MCF 10A (cell line): ENCODE measurements at regions of chr9 and their contacts with region 1.

Region 1: GRCh38 chr9:35923927-35924763 is 14.9 kb downstream of the SPAAR start:
- DNase-seq: peak; percentile 87
- H3K4me3 Mint-ChIP-seq: peak overlapping the region; percentile 49
- H3K27ac Mint-ChIP-seq: peak overlapping the region; percentile 90
- H3K4me1 Mint-ChIP-seq: peaks cover 16% of the 10 kb centered on the region
- H3K27me3 Mint-ChIP-seq: no peaks in the 10 kb centered on the region
- CTCF ChIP-seq: no peak

Region 2: DNA sequence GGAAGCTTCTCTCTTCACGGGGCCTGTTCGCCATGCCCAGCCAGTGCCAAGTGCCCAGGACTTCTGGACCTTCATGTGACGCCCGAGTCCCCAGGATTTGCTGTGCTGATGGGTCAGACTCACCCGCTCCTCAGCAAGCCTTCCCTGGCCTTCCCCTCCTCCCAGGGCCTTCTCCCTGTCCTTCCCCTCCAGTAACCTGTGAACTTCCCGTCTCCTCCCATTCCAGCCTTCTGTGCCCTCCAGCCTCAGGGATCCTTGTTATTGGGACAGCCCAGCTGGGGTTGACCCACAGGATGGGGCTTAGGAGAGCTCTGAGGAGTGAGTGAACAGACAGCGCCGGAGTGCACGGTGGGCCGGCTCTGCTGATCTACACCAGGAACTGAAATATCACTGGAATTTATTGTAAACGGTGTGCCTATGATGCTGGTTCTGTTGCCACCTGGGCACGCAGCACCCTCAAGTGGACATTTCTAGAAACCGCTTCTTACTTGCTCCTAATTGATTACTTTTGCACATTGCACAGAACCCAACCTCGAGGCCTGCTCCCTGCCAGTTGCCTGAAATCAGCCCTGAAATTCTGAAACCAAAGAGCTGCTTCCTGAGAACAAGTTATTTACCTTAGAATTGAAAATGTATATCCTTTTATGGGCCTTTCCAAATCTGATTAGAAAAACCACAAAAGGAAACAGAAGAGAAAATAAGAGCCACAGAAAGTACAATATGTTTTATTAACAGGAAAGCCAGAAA is 13.4 kb before region 1 on chr9:
- CTCF ChIA-PET with region 1: interaction called, 26 read pairs
- POLR2A ChIA-PET with region 1: interaction called, 55 read pairs
- intact Hi-C with region 1: no loop called
- DNase-seq: peak; percentile 86
- H3K4me3 Mint-ChIP-seq: peak overlapping the region; percentile 53
- H3K27ac Mint-ChIP-seq: peak overlapping the region; percentile 88
- H3K4me1 Mint-ChIP-seq: peaks cover 42% of the 10 kb centered on the region
- H3K27me3 Mint-ChIP-seq: no peaks in the 10 kb centered on the region
- CTCF ChIP-seq: peak; percentile 55

Region 3: GRCh38 chr9:35935755-35936509 is 11.8 kb after region 1 on chr9:
- CTCF ChIA-PET with region 1: interaction called, 3 read pairs
- POLR2A ChIA-PET with region 1: interaction called, 26 read pairs
- intact Hi-C with region 1: no loop called
- DNase-seq: peak; percentile 43
- H3K4me3 Mint-ChIP-seq: no peak overlapping the region
- H3K27ac Mint-ChIP-seq: peak overlapping the region; percentile 74
- H3K4me1 Mint-ChIP-seq: peaks cover 19% of the 10 kb centered on the region
- H3K27me3 Mint-ChIP-seq: no peaks in the 10 kb centered on the region
- CTCF ChIP-seq: no peak

Region 4: DNA sequence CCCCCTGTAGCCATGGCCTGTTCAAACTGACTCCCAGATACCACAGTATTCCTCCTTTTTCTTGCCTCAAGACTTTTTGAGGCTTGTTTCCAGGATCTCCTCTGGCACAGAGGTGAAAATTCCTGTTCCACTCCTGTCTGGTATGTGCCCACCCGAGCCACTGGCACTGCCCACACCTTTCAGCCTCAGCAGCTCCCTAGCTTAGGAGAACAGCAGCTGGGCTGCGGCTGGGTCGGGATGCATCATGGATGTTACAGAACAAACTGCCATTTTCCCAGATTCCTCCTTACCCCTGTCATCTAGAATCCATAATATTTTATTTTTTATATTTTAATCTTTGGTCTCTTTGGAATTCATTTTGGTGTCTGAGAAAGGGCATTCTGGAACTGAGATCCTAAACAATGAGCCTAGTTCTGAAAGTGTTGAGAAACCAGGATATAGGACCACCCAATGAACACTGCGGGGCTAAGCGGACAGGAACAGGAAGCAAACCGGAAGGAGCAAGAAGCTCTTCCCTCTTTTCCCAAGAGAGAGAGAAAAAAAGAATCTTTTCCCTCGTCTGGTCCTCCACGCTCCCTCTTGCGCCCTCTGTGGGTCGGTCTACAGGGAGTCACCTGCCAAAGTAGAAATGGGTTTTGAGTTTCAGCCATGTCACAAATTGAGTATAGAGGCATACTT is 21.3 kb after region 1 on chr9:
- CTCF ChIA-PET with region 1: interaction called, 15 read pairs
- POLR2A ChIA-PET with region 1: interaction called, 14 read pairs
- intact Hi-C with region 1: no loop called
- DNase-seq: peak; percentile 89
- H3K4me3 Mint-ChIP-seq: peak overlapping the region; percentile 72
- H3K27ac Mint-ChIP-seq: peak overlapping the region; percentile 79
- H3K4me1 Mint-ChIP-seq: peaks cover 7% of the 10 kb centered on the region
- H3K27me3 Mint-ChIP-seq: no peaks in the 10 kb centered on the region
- CTCF ChIP-seq: peak; percentile 73